Heart left ventricle (tissue), 16 donors: ENCODE measurements at regions of chr7 and their contacts with region 1.

Region 1: DNA sequence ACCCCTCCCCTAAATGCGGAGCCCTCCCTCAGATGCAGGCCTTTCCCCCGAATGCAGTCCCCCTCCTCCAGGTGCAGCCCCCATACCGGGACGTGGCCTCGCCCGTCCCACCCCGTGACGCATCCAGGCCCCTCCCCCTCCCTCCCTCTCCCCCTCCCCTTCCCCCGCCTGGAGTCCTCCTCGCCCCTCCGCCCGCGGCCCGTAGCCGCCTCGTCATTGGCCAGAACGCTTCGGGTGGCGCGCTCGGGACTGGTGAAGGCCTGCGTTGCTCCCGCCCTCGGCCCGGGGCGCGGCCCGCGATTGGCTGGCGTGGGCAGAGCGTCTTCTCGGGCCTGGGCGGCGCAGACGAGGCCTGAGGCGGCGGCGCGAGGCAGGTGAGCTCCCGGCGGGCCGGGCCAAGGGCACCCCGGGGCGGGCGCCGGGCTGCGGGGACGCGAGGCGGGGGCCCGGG is 16.0 kb upstream of the SUN1 start:
- DNase-seq: peak; percentile 98 to 99 (median 99)
- ATAC-seq: peak; percentile 89 to 96 (median 92)
- H3K4me3 ChIP-seq: peak overlapping the region in 11 of 12 donors; percentile 61 to 99 (median 77)
- H3K27ac ChIP-seq: peak overlapping the region in 11 of 12 donors; percentile 50 to 97 (median 80)
- H3K4me1 ChIP-seq: peaks cover 4 to 75% (median 55%) of the 10 kb centered on the region in 12 donors
- H3K27me3 ChIP-seq: no peaks in the 10 kb centered on the region
- CTCF ChIP-seq: no peak
- POLR2A ChIP-seq: peak; percentile 75 to 81

Region 2: GRCh38 chr7:1044191-1045068 is 228.1 kb after region 1 on chr7 and contains the start of gene GPR146:
- intact Hi-C with region 1: loop called in 1 of 10 experiments (anchors 5 kb)
- DNase-seq: peak; percentile 97 to 98 (median 98)
- ATAC-seq: peak; percentile 95 to 97 (median 96)
- H3K4me3 ChIP-seq: peak within 1 kb of the TSS; percentile 60 to 94 (median 78)
- H3K27ac ChIP-seq: peak within 1 kb of the TSS; percentile 85 to 97 (median 92)
- H3K4me1 ChIP-seq: peaks cover 5 to 77% (median 51%) of the 10 kb centered on the region in 12 donors
- H3K27me3 ChIP-seq: no peaks in the 10 kb centered on the region
- CTCF ChIP-seq: peak; percentile 30 to 72 (median 52)
- POLR2A ChIP-seq: peak in 1 of 2 donors; percentile 50
- total RNA-seq, gene GPR146: 12.3 to 56.8 (median 25.2) TPM